ENCODE measurements at regions of chr1 and their contacts with region 1.

Region 1: DNA sequence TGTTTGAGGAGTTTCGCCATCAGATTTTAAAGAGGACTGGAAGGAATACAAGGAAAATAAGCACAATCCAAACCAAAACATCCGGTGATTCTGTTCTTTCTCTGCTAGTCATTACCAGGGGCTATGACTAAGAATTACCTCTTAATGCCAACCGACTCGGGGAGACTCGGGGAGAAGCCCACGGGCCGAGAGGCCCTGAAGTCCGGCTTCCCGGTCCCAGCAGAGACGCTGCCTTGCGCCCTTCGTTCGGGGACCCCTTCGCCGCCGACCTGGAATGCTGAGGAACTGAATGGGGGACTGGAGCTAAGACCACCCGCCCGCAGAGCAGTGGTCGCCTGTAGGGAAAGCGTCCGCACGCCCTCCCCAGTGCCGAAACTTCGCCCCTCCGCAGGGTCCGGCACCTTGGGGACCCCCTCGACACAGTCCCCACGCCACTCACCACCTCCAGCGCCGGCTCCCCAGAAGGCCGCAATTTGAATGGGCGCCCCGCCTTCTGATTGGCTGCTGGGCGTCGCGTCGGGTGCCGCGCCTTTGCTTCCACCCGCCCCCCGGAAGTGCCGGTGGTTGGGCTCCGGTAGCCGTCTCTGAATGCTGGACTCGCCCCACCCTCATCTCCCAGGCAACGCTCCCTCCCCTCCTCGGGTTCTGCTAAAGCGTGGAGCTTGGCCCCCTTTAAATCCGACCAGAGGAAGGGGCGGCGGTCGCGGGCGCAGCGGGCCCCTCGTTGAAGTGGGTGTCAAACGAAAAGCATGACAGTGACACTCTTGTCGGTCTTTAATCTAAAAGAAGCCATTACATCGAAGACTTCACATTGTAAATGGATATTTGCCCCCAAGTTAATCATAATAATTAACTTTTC is at the start of gene KIF14:
- DNase-seq: peak; percentile 96
- H3K4me3 Mint-ChIP-seq: peak within 1 kb of the TSS; percentile 87
- H3K27ac Mint-ChIP-seq: peak within 1 kb of the TSS; percentile 66
- H3K4me1 Mint-ChIP-seq: peaks cover 23% of the 10 kb centered on the region
- H3K27me3 Mint-ChIP-seq: no peaks in the 10 kb centered on the region
- total RNA-seq, gene KIF14: 15.7 to 17.1 TPM

Region 2: GRCh38 chr1:200558866-200559459 is 61.5 kb before region 1 on chr1:
- CTCF ChIA-PET with region 1: interaction called, 22 read pairs
- POLR2A ChIA-PET with region 1: no interaction called
- intact Hi-C with region 1: loop called (anchors 2 kb)
- DNase-seq: no peak
- H3K4me3 Mint-ChIP-seq: no peak overlapping the region
- H3K27ac Mint-ChIP-seq: no peak overlapping the region
- H3K4me1 Mint-ChIP-seq: peaks cover 8% of the 10 kb centered on the region
- H3K27me3 Mint-ChIP-seq: no peaks in the 10 kb centered on the region

Region 3: GRCh38 chr1:200669314-200670241 is 49.1 kb after region 1 on chr1 and contains the start of gene DDX59:
- CTCF ChIA-PET with region 1: interaction called, 63 read pairs
- POLR2A ChIA-PET with region 1: interaction called, 23 read pairs
- intact Hi-C with region 1: loop called (anchors 1 kb)
- DNase-seq: peak; percentile 95
- H3K4me3 Mint-ChIP-seq: peak within 1 kb of the TSS; percentile 92
- H3K27ac Mint-ChIP-seq: peak within 1 kb of the TSS; percentile 95
- H3K4me1 Mint-ChIP-seq: peaks cover 36% of the 10 kb centered on the region
- H3K27me3 Mint-ChIP-seq: no peaks in the 10 kb centered on the region
- total RNA-seq, gene DDX59: 19.4 to 23.4 TPM

Region 4: DNA sequence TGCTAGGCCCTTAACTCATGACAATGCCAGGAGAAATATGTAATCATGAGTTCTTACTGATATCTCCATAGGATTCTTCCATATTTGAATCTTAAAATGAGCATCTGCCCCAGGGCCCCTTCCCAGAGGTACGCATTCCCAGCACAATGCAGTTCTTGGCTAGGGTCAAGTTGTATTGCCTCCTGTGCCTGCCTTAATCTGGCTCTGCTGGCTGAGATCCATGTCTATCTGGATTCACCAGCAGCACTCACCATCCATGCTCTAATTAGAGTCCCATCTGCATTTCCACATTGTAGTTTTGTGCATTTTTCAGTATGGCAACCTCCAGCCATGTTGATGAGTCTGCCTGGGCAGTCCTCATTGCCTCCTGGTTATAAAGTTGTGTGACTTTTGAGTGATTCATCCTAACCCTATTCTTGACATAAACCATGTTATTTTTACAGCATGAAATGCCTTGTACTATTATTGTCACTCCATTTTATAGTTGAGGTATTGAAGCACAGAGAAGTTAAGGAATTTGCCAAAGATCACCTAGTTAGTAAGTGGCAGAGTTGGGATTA is 174.1 kb after region 1 on chr1:
- CTCF ChIA-PET with region 1: interaction called, 12 read pairs
- POLR2A ChIA-PET with region 1: no interaction called
- intact Hi-C with region 1: no loop called
- DNase-seq: no peak
- H3K4me3 Mint-ChIP-seq: no peak overlapping the region
- H3K27ac Mint-ChIP-seq: no peak overlapping the region
- H3K4me1 Mint-ChIP-seq: no peaks in the 10 kb centered on the region
- H3K27me3 Mint-ChIP-seq: no peaks in the 10 kb centered on the region

Region 5: GRCh38 chr1:200811704-200812103 is 191.2 kb after region 1 on chr1:
- CTCF ChIA-PET with region 1: interaction called, 43 read pairs
- POLR2A ChIA-PET with region 1: interaction called, 3 read pairs
- intact Hi-C with region 1: no loop called
- DNase-seq: no peak
- H3K4me3 Mint-ChIP-seq: no peak overlapping the region
- H3K27ac Mint-ChIP-seq: no peak overlapping the region
- H3K4me1 Mint-ChIP-seq: no peaks in the 10 kb centered on the region
- H3K27me3 Mint-ChIP-seq: no peaks in the 10 kb centered on the region

Region 6: DNA sequence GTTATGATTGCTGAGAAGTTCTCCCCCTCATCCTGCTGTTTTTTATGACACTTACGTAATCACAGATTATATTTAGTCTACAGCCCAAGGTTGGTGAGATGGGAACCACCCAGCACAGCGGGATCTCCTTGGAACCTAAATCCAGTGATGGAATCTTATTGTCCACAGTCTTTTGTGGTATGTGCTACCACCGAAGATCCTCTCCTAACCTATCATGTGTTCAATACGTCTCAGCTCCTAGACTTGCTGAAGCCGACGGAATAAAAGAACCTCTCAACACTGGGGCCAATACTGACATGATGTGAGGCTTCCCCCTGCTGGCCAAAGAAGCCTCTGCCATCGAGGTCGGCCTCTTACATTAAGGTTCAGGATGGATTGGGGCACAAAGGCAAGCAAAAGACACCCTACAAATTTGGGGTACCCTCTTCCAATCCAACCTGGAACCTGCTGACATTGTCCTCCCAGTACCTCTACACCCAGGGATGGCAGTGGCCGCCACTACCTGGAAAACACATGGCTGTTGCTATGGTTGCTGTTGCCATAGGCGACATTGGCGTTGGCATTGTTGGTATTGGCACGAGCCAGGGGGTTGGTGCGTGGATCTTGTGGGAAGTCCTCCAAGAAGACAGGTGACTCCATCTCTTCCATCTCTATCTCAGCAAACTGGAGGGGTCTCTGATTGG is 422.4 kb after region 1 on chr1:
- CTCF ChIA-PET with region 1: interaction called, 4 read pairs
- POLR2A ChIA-PET with region 1: no interaction called
- intact Hi-C with region 1: loop called (anchors 1 kb)
- DNase-seq: peak; percentile 81
- H3K4me3 Mint-ChIP-seq: no peak overlapping the region
- H3K27ac Mint-ChIP-seq: no peak overlapping the region
- H3K4me1 Mint-ChIP-seq: peaks cover 3% of the 10 kb centered on the region
- H3K27me3 Mint-ChIP-seq: no peaks in the 10 kb centered on the region